Naive thymus-derived CD8-positive, alpha-beta T cell (primary cell): ENCODE measurements at regions of chr6 and their contacts with region 1.

Region 1: DNA sequence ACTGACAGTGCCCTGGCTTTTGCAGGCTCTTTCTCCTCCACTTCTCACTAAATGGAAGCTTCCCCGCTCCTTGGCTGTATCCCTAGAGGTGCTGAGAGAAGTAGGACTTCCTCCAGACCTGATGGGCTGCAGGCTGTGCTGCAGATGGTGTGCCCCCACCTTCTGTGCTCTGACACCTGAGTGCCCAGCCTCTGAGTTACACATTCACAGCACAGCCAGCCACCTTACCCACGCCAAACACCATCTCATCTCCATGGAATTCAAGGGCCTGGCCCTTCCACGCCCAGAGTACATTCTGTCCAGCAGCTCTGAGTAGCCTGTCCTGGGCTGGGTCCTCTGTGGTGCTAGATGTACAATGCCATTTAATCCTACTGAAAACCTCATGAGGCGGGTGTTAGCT is 5.3 kb downstream of the SFTA2 start:
- DNase-seq: no peak
- ATAC-seq: no peak
- H3K4me3 Mint-ChIP-seq: no peak overlapping the region
- H3K27ac Mint-ChIP-seq: no peak overlapping the region
- H3K4me1 Mint-ChIP-seq: no peaks in the 10 kb centered on the region
- H3K27me3 Mint-ChIP-seq: no peaks in the 10 kb centered on the region

Region 2: GRCh38 chr6:30793521-30794194 is 133.0 kb before region 1 on chr6:
- POLR2A ChIA-PET with region 1: no interaction called
- DNase-seq: peak in 3 of 10 donors; percentile 39 to 60 (median 55)
- ATAC-seq: peak; percentile 95 to 97
- H3K4me3 Mint-ChIP-seq: peak overlapping the region; percentile 51 to 89 (median 78)
- H3K27ac Mint-ChIP-seq: peak overlapping the region; percentile 93 to 99 (median 96)
- H3K4me1 Mint-ChIP-seq: peaks cover 20 to 54% (median 50%) of the 10 kb centered on the region in 4 donors
- H3K27me3 Mint-ChIP-seq: no peaks in the 10 kb centered on the region

Region 3: GRCh38 chr6:30870546-30870945 is 56.1 kb before region 1 on chr6:
- POLR2A ChIA-PET with region 1: interaction called, 13 read pairs
- DNase-seq: no peak
- ATAC-seq: no peak
- H3K4me3 Mint-ChIP-seq: peak overlapping the region in 1 of 10 donors; percentile 42
- H3K27ac Mint-ChIP-seq: peak overlapping the region in 3 of 10 donors; percentile 5 to 33 (median 20)
- H3K4me1 Mint-ChIP-seq: peaks cover 2 to 17% (median 9%) of the 10 kb centered on the region in 4 donors
- H3K27me3 Mint-ChIP-seq: no peaks in the 10 kb centered on the region

Region 4: DNA sequence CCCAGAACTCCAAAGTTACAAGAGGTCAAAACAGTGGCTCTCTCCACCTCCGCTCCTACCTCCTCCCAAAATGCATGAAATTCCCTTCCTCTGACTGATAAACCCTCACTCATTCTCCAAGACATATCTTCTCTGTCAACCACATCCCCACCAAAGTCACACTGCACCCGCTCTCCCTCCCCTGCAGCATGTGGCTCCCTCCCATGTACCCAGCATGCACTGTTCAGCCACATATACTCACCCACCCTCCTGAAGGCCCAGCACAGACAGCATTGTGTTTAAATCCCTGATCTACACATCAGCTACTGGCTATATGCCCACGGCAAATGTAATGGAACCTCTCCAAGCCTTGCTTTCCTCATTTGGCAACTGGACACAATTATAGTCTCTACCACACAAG is 249.3 kb after region 1 on chr6:
- POLR2A ChIA-PET with region 1: no interaction called
- DNase-seq: peak in 1 of 10 donors; percentile 15
- ATAC-seq: peak in 1 of 2 donors; percentile 53
- H3K4me3 Mint-ChIP-seq: peak overlapping the region in 5 of 10 donors; percentile 4 to 31 (median 18)
- H3K27ac Mint-ChIP-seq: peak overlapping the region in 7 of 10 donors; percentile 15 to 82 (median 53)
- H3K4me1 Mint-ChIP-seq: peaks cover 2 to 28% (median 21%) of the 10 kb centered on the region in 4 donors
- H3K27me3 Mint-ChIP-seq: no peaks in the 10 kb centered on the region